ENCODE measurements at regions of chr10 and their contacts with region 1.

Region 1: DNA sequence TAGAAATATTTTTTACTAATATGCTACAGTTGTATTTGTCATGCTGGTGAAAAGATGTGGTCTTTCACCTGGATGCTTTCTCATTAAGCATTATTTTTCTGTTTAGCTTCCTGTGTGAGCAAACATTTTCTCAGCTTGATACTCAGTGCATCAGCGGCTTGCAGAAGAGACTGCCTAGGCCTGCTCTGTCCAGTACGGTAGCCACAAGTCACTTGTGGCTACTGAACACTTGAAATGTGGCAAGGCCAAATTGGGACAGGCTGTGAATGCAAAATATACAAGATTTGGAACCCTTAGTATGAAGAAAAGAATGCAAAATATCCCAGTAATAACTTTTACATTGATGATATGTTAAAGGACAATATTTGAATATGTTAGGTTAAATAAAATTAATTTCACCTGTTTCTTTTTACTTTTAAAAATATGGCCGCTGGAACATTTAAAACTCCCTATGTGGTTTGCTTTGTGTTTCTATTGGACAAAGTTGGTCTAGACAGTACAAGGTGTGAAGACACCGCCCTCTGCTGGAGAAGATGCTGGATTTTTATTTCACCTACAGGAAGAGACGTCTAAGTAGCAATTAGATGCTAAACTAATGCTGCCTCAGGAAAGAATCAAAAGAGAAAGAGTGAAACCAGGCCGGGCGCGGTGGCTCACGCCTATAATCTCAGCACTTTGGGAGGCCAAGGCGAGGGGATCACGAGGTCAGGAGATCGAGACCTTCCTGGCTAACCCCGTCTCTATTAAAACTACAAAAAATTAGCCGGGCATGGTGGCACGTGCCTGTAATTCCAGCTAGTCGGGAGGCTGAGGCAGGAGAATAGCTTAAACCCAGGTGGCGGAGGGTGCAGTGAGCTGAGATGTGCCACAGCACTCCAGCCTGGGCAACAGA is 5.3 kb downstream of the SRGN start:
- DNase-seq: peak; percentile 89
- H3K4me3 Mint-ChIP-seq: no peak overlapping the region
- H3K27ac Mint-ChIP-seq: no peak overlapping the region
- H3K4me1 Mint-ChIP-seq: peaks cover 7% of the 10 kb centered on the region
- H3K27me3 Mint-ChIP-seq: no peaks in the 10 kb centered on the region
- CTCF ChIP-seq: peak; percentile 72

Region 2: DNA sequence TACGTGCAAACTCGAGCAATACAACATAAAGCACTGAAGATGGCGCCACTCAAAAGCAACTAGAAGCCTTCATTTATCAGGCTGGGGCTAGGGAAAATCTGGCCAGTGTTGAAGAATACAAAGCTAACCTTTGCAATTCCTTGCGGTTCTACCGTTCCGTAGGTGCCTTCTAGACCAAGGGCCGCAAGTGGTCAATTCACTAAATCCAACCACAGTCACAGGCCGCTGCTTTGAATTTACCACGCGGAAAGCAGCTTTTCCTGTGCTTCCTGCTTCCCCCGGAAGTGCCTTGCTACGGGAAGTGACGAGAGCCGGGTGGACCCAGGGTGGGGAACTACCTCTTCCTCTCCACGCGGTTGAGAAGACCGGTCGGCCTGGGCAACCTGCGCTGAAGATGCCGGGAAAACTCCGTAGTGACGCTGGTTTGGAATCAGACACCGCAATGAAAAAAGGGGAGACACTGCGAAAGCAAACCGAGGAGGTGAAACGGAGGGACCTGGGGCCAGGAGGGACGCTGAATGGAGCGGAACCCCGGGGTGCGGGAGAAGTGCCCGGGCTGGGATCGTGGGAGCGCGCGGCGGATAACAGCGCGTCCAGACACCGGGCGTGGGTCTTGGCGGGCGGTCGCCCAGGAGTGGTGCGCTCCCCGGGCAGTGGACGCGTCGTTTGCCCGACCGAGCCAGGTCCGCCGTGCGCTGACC is 137.2 kb before region 1 on chr10 and contains the start of gene DDX21:
- CTCF ChIA-PET with region 1: interaction called, 12 read pairs
- POLR2A ChIA-PET with region 1: interaction called, 3 read pairs
- intact Hi-C with region 1: loop called (anchors 1 kb)
- DNase-seq: peak; percentile 93
- H3K4me3 Mint-ChIP-seq: peak within 1 kb of the TSS; percentile 100
- H3K27ac Mint-ChIP-seq: peak within 1 kb of the TSS; percentile 100
- H3K4me1 Mint-ChIP-seq: peaks cover 8% of the 10 kb centered on the region
- H3K27me3 Mint-ChIP-seq: no peaks in the 10 kb centered on the region
- CTCF ChIP-seq: peak; percentile 41
- total RNA-seq, gene DDX21: 144 and 216 TPM in 2 replicates

Region 3: GRCh38 chr10:68988530-68989316 is 104.5 kb before region 1 on chr10 and contains the start of gene KIFBP:
- CTCF ChIA-PET with region 1: interaction called, 32 read pairs
- POLR2A ChIA-PET with region 1: interaction called, 4 read pairs
- intact Hi-C with region 1: no loop called
- DNase-seq: peak; percentile 98
- H3K4me3 Mint-ChIP-seq: peak within 1 kb of the TSS; percentile 98
- H3K27ac Mint-ChIP-seq: peak within 1 kb of the TSS; percentile 97
- H3K4me1 Mint-ChIP-seq: peaks cover 24% of the 10 kb centered on the region
- H3K27me3 Mint-ChIP-seq: no peaks in the 10 kb centered on the region
- CTCF ChIP-seq: peak; percentile 26
- total RNA-seq, gene KIFBP: 20.9 and 23.2 TPM in 2 replicates

Region 4: GRCh38 chr10:69123747-69124562 is 30.8 kb after region 1 on chr10 and contains the start of gene VPS26A:
- CTCF ChIA-PET with region 1: interaction called, 14 read pairs
- POLR2A ChIA-PET with region 1: interaction called, 13 read pairs
- intact Hi-C with region 1: loop called (anchors 1 kb)
- DNase-seq: peak; percentile 98
- H3K4me3 Mint-ChIP-seq: peak within 1 kb of the TSS; percentile 94
- H3K27ac Mint-ChIP-seq: peak within 1 kb of the TSS; percentile 94
- H3K4me1 Mint-ChIP-seq: peaks cover 6% of the 10 kb centered on the region
- H3K27me3 Mint-ChIP-seq: no peaks in the 10 kb centered on the region
- CTCF ChIP-seq: peak; percentile 21
- total RNA-seq, gene VPS26A: 63.7 and 80.9 TPM in 2 replicates

Region 5: DNA sequence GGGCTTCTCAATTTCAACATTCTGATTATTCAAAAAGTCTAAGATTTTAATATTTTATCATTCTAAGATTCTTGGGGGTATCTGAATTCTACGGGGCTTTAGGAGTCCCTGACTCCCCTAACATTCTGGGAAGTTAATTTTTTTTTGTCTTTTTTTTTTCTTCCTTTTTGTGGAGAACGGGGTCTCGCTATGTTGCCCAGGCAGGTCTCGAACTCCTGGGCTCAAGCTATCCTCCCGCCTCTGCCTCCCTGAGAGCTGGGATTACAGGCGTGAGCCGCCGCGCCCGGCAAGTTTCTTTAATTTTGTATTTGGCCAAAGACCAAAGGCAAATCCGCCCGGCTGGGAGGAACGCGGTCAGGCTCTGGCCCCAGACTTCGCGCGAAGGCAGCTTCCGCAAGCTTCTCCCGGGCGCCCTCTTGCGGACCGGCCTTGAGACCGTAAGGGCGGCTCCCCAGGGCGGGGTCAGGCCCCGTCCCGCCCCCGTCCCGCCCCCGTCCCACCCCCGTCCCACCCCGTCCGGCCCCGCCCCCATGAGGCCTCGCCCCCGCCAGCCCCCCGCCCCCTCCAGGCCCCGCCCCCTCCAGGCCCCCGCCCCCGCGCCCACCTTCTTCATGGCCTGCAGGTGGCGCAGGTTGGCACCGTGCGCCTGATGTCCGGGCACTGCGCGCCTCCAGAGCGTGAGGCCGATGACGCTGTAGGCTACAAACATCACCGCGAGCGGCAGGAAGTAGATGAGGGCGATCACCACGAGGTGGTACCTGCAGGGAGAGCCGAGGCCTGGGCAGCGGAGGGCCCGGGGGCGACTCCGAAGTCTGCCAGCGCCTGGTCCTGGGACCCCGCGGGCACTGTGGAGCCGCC is 315.3 kb after region 1 on chr10:
- CTCF ChIA-PET with region 1: no interaction called
- POLR2A ChIA-PET with region 1: no interaction called
- intact Hi-C with region 1: loop called (anchors 1 kb)
- DNase-seq: peak; percentile 93
- H3K4me3 Mint-ChIP-seq: peak overlapping the region; percentile 65
- H3K27ac Mint-ChIP-seq: peak overlapping the region; percentile 40
- H3K4me1 Mint-ChIP-seq: peaks cover 16% of the 10 kb centered on the region
- H3K27me3 Mint-ChIP-seq: no peaks in the 10 kb centered on the region
- CTCF ChIP-seq: peak; percentile 76